Activated T-helper 1 cell treated with anti-CD3 and anti-CD28 coated beads, Interleukin-12 subunit alpha, Interleukin-12 subunit beta, Interleukin-2, Interleukin-4 antibody, amounts not matched to agents 30 ng/mL and 10 ng/mL and 1 ng/mL, durations not matched to agents 14 hours and 24 hours and 36 hours (primary cell): ENCODE measurements at regions of chr4 and their contacts with region 1.

Region 1: GRCh38 chr4:7761720-7762119 is 177.9 kb downstream of the AFAP1 start:
- DNase-seq: peak; percentile 26
- H3K4me3 Mint-ChIP-seq: no peak overlapping the region
- H3K27ac Mint-ChIP-seq: no peak overlapping the region
- H3K4me1 Mint-ChIP-seq: peaks cover 43% of the 10 kb centered on the region
- H3K27me3 Mint-ChIP-seq: no peaks in the 10 kb centered on the region

Region 2: DNA sequence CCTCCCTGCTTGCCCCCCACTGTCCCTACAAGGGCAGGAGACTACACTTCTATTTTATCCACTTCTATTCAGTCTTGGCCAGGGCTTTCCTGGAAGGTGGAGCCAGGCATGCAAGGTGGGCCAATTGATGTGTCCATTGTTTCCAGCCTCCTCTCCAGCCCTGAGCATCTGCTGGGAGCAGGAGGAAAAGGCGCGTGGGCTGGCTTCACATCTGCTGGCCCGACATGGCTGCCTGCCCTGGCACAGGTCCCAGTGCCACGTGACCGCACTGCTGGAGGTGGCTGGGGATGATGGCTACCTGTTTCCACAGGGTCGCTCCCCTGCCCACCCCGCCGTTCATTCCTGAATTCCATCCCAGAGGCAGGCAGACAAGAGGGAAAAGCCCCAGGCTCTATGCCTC is 69.7 kb before region 1 on chr4:
- intact Hi-C with region 1: no loop called
- DNase-seq: no peak
- H3K4me3 Mint-ChIP-seq: no peak overlapping the region
- H3K27ac Mint-ChIP-seq: no peak overlapping the region
- H3K4me1 Mint-ChIP-seq: no peaks in the 10 kb centered on the region
- H3K27me3 Mint-ChIP-seq: no peaks in the 10 kb centered on the region

Region 3: GRCh38 chr4:7781366-7781765 is 19.6 kb after region 1 on chr4:
- intact Hi-C with region 1: loop called (anchors 2 kb)
- DNase-seq: no peak
- H3K4me3 Mint-ChIP-seq: peak overlapping the region; percentile 12
- H3K27ac Mint-ChIP-seq: peak overlapping the region; percentile 78
- H3K4me1 Mint-ChIP-seq: peaks cover 55% of the 10 kb centered on the region
- H3K27me3 Mint-ChIP-seq: no peaks in the 10 kb centered on the region